ENCODE measurements at regions of chr11 and their contacts with region 1.

Region 1: DNA sequence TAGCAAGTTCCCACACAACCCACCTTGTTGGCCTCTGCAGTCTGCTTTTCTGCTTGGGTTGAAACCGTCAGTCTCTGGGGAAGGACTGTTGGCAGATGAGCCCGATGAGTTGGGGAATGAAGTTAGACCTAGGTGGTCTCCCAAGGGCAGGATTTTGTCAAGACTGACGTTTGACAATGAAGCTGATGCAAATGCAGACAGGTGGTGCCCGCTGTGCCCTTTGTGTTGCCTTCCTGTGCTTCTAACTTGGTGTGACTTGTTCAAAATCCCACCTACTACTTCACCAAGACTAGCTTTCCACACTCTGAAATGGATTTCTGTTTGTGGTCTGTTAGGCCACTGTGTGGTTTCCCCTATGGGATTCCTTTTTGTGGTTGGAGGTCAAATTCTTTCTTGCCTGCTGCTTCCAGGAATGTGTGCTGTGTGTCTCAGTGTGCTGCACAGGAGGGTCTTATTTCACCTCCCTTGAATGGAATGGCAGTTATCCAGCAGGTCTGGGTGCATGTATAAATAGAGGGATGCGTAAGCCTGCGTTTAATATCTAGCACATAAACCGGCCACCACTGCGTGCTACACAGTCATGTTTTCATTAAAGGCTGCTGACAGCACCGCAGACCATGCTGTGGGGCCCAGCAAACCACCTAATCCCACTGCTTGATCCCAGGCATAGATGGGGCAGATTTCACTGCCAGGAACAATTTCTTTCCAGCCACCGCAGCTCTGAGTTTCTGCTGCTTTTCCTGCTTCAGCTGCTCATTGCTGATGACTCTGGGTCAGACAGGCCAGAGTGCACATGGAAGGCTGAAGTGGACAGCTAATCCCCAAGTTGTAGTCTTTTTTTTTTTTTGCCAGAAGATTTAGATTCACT is 44.8 kb downstream of the ADAMTS8 start:
- DNase-seq: no peak
- H3K4me3 ChIP-seq: no peak overlapping the region
- H3K27ac ChIP-seq: peak overlapping the region in 2 of 4 donors; percentile 27 to 32
- H3K4me1 ChIP-seq: peaks cover 0 to 5% (median under 1%) of the 10 kb centered on the region in 4 donors
- H3K27me3 ChIP-seq: no peaks in the 10 kb centered on the region
- CTCF ChIP-seq: no peak
- EP300 ChIP-seq: no peak
- POLR2A ChIP-seq: no peak

Region 2: DNA sequence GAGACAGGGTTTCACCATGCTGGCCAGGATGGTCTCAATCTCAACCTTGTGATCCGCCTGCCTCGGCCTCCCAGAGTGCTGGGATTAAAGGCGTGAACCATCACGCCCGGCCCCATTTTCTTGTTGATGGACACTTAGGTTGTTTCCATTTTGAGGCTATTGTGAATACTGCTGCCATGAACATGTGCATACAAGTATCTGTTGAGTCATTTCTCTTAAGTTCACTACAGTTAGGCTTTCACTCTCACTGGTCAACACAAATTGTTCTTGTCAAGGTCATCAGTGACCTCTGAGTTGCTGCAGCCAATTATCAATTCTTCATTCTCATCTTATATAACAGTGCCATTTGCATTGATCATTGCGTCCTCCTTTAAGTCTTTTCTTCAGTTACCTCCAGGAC is 55.9 kb before region 1 on chr11:
- in situ Hi-C with region 1: no loop called
- intact Hi-C with region 1: loop called (anchors 5 kb)
- DNase-seq: no peak
- H3K4me3 ChIP-seq: no peak overlapping the region
- H3K27ac ChIP-seq: no peak overlapping the region
- H3K4me1 ChIP-seq: no peaks in the 10 kb centered on the region
- H3K27me3 ChIP-seq: no peaks in the 10 kb centered on the region
- CTCF ChIP-seq: no peak
- EP300 ChIP-seq: no peak
- POLR2A ChIP-seq: no peak

Region 3: DNA sequence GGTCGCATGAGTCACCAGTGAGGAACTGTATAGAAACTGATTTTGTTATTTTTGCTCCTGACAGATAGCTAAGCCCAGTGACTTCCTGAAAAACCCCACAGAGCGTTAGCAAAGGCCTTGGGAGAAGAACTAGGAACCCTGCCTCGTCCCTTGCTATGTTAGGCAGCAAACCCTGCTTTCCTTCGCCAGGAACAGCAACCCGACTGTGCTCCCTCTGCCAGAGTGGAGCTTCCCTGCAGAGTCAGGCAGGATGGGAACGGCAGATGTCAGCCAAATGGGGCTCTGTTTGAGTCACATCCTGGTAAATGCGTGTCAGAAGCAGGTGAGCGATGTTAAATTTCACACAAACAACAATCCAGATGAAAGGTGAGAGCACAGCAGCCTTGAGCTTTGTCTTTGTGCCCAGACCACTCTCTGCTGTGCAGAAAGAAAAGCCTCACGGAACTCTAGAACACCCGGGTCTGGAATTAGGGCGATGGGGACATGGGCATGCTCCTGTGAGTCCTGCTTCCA is 251.4 kb after region 1 on chr11:
- in situ Hi-C with region 1: no loop called
- intact Hi-C with region 1: no loop called
- DNase-seq: no peak
- H3K4me3 ChIP-seq: no peak overlapping the region
- H3K27ac ChIP-seq: no peak overlapping the region
- H3K4me1 ChIP-seq: peaks cover 0 to 14% (median 1%) of the 10 kb centered on the region in 4 donors
- H3K27me3 ChIP-seq: no peaks in the 10 kb centered on the region
- CTCF ChIP-seq: no peak
- EP300 ChIP-seq: no peak
- POLR2A ChIP-seq: no peak